HEK293T (cell line): ENCODE measurements at regions of chr17 and their contacts with region 1.

Region 1: DNA sequence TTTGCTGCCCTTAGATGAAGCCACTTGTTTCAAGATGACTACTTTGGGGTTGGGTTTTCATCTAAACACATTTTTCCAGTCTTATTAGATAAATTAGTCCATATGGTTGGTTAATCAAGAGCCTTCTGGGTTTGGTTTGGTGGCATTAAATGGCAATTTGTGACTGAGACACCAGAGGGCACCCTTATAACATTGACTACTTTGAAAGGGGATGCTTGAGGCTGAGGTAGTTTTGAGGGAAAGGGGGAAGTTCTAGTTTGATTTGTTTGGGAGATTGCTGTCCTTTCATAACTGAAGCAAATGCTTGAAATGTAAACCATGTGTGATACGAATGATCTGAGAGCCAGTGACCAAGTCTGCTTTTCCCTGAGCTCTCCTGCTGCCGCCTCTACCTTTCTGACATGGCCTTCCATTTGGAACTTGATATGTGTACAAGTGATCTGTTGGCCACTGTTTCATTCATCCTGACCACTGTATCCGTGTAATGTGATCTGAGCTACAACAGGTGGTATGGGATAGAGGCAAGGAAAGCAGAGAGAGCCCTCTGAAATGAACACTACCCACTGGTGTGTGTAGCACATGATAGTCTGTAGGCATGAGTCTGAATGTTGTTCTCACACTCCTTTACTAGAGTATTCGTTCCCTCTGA is 5.8 kb upstream of the RARA start:
- DNase-seq: peak; percentile 34

Region 2: DNA sequence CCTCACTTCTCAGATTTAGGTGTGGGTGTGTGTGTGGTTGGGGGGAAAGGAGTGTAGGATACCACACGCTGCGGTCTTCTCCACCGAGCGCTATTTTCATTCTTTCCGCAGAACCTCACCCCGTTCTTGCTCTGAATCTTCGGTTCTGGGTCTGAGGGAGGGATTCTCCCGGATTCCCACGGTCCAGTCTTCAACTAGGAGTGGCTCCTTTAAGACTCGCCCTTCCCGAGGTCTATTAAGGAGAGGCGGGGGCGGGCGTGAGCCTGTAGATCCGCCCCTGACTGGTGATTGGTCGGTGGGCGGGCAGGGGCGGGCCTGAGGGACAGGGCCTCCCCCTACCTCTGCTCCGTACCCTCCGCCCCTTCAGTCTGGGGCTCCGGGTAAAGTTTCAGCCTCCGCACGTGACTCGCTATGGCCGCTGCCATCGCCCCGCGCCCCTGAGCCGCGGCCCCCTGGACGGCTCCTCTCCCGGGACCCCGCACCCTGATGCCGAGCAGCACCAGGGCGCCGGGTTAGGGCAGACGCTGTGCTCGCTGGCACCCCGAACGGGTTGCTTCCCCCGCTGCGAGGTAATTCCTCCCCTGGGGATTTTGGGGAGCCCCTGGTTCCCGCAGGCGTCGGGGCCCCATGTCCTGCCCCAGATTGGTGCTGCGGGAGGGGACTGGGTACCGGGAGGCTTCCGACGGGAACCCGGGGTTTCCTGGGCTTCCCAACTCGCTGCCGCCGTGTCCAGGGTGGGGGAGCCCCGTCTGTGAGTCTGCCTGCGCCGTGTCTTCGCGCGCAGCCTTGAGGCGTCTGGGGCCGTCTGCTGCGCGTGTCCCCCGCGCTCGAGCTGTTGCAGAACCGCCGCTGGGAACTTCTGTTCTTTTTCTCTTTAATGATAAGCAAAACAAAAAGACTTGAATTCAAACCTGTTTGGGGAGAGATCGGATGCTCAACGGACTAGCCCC is 15.0 kb after region 1 on chr17:
- CTCF ChIA-PET with region 1: interaction called, 18 read pairs
- POLR2A ChIA-PET with region 1: interaction called, 9 read pairs
- DNase-seq: peak; percentile 93

Region 3: GRCh38 chr17:40355123-40355803 is 52.1 kb after region 1 on chr17:
- CTCF ChIA-PET with region 1: interaction called, 31 read pairs
- POLR2A ChIA-PET with region 1: interaction called, 8 read pairs
- DNase-seq: peak; percentile 72